Naive thymus-derived CD4-positive, alpha-beta T cell (primary cell): ENCODE measurements at regions of chr17 and their contacts with region 1.

Region 1: GRCh38 chr17:68457539-68458259 is 403 bp upstream of the WIPI1 start:
- DNase-seq: peak; percentile 96 to 99 (median 97)
- ATAC-seq: peak; percentile 98
- H3K4me3 ChIP-seq: peak overlapping the region; percentile 52
- H3K4me3 Mint-ChIP-seq: peak overlapping the region; percentile 68 to 87 (median 84)
- H3K27ac ChIP-seq: peak overlapping the region; percentile 73
- H3K27ac Mint-ChIP-seq: peak overlapping the region; percentile 45 to 98 (median 91)
- H3K4me1 ChIP-seq: peaks cover 36 to 52% of the 10 kb centered on the region in 2 donors
- H3K4me1 Mint-ChIP-seq: peaks cover 26 to 66% (median 58%) of the 10 kb centered on the region in 7 donors
- H3K27me3 ChIP-seq: no peaks in the 10 kb centered on the region
- H3K27me3 Mint-ChIP-seq: no peaks in the 10 kb centered on the region

Region 2: GRCh38 chr17:67800495-67800928 is 657.2 kb before region 1 on chr17:
- CTCF ChIA-PET with region 1: no interaction called
- POLR2A ChIA-PET with region 1: no interaction called
- intact Hi-C with region 1: loop called in 1 of 2 experiments (anchors 2 kb)
- DNase-seq: peak in 6 of 9 donors; percentile 10 to 40 (median 19)
- ATAC-seq: peak; percentile 86
- H3K4me3 ChIP-seq: no peak overlapping the region
- H3K4me3 Mint-ChIP-seq: no peak overlapping the region
- H3K27ac ChIP-seq: no peak overlapping the region
- H3K27ac Mint-ChIP-seq: peak overlapping the region in 1 of 9 donors; percentile 39
- H3K4me1 ChIP-seq: no peaks in the 10 kb centered on the region
- H3K4me1 Mint-ChIP-seq: peaks cover 0 to 9% (median 0%) of the 10 kb centered on the region in 7 donors
- H3K27me3 ChIP-seq: no peaks in the 10 kb centered on the region
- H3K27me3 Mint-ChIP-seq: peaks cover 0 to 3% (median 0%) of the 10 kb centered on the region in 5 donors

Region 3: DNA sequence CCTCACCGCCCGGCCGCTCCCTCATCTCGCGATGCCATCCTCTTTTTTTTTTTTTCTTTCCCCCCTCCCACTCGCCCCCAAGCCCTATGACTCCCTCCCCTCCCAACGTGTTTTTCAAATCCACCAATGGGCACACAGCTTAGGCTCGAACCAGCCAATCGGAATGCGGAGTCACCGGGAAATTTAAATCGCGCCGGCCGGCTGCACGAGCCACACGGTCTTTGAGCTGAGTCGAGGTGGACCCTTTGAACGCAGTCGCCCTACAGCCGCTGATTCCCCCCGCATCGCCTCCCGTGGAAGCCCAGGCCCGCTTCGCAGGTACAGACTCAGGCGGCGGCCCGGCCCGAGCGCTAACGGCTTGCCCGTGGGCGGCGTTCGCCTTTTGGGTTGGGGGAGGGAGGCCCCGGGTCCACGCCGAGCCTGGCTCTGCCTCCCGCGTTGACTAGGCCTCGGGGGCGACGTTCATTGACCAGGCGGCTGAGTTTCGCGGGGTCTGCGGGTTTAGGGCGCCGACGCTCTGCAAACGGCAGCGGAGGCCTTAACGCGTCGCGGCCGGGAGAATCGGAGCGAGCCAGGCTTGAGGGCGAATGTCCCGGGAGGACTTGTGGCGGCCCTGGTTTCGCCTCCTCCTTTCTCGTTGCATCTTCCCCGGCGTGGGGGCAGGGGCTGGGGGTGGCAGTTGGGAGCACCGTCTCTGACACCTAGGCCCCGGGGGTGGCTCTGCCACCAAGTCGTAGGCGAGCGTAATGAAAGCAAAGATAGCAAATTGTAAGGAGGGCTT is 422.0 kb before region 1 on chr17 and contains the start of gene KPNA2:
- CTCF ChIA-PET with region 1: interaction called, 4 read pairs
- POLR2A ChIA-PET with region 1: no interaction called
- intact Hi-C with region 1: loop called (anchors 1 kb)
- DNase-seq: peak; percentile 70 to 95 (median 91)
- ATAC-seq: peak; percentile 94
- H3K4me3 ChIP-seq: peak within 1 kb of the TSS; percentile 71
- H3K4me3 Mint-ChIP-seq: peak within 1 kb of the TSS; percentile 83 to 97 (median 91)
- H3K27ac ChIP-seq: peak within 1 kb of the TSS; percentile 91
- H3K27ac Mint-ChIP-seq: peak within 1 kb of the TSS; percentile 83 to 97 (median 92)
- H3K4me1 ChIP-seq: peaks cover 8 to 16% of the 10 kb centered on the region in 2 donors
- H3K4me1 Mint-ChIP-seq: peaks cover 6 to 32% (median 15%) of the 10 kb centered on the region in 7 donors
- H3K27me3 ChIP-seq: no peaks in the 10 kb centered on the region
- H3K27me3 Mint-ChIP-seq: peaks cover 0 to 3% (median 0%) of the 10 kb centered on the region in 5 donors
- total RNA-seq, gene KPNA2: 8.4 to 161 (median 45.9) TPM

Region 4: GRCh38 chr17:68205251-68205807 is 252.4 kb before region 1 on chr17:
- CTCF ChIA-PET with region 1: interaction called, 8 read pairs
- POLR2A ChIA-PET with region 1: interaction called, 10 read pairs
- intact Hi-C with region 1: loop called in 1 of 2 experiments (anchors 1 kb)
- DNase-seq: peak; percentile 81 to 96 (median 91)
- ATAC-seq: peak; percentile 94
- H3K4me3 ChIP-seq: peak overlapping the region; percentile 50
- H3K4me3 Mint-ChIP-seq: peak overlapping the region; percentile 82 to 96 (median 88)
- H3K27ac ChIP-seq: peak overlapping the region; percentile 81
- H3K27ac Mint-ChIP-seq: peak overlapping the region in 7 of 9 donors; percentile 62 to 94 (median 88)
- H3K4me1 ChIP-seq: peaks cover 3 to 11% of the 10 kb centered on the region in 2 donors
- H3K4me1 Mint-ChIP-seq: peaks cover 7 to 38% (median 28%) of the 10 kb centered on the region in 7 donors
- H3K27me3 ChIP-seq: no peaks in the 10 kb centered on the region
- H3K27me3 Mint-ChIP-seq: peaks cover 0 to 12% (median 0%) of the 10 kb centered on the region in 5 donors

Region 5: GRCh38 chr17:68255731-68256538 is 201.8 kb before region 1 on chr17:
- CTCF ChIA-PET with region 1: interaction called, 11 read pairs
- POLR2A ChIA-PET with region 1: interaction called, 7 read pairs
- intact Hi-C with region 1: no loop called
- DNase-seq: peak in 4 of 9 donors; percentile 27 to 44 (median 36)
- ATAC-seq: peak; percentile 32
- H3K4me3 ChIP-seq: peak overlapping the region; percentile 7
- H3K4me3 Mint-ChIP-seq: peak overlapping the region in 9 of 10 donors; percentile 18 to 70 (median 62)
- H3K27ac ChIP-seq: peak overlapping the region; percentile 92
- H3K27ac Mint-ChIP-seq: peak overlapping the region; percentile 77 to 97 (median 93)
- H3K4me1 ChIP-seq: peaks cover 74 to 91% of the 10 kb centered on the region in 2 donors
- H3K4me1 Mint-ChIP-seq: peaks cover 42 to 84% (median 75%) of the 10 kb centered on the region in 7 donors
- H3K27me3 ChIP-seq: no peaks in the 10 kb centered on the region
- H3K27me3 Mint-ChIP-seq: no peaks in the 10 kb centered on the region

Region 6: GRCh38 chr17:68512247-68512982 is 54.7 kb after region 1 on chr17 and contains the start of gene PRKAR1A:
- CTCF ChIA-PET with region 1: no interaction called
- POLR2A ChIA-PET with region 1: no interaction called
- intact Hi-C with region 1: loop called (anchors 1 to 2 kb)
- DNase-seq: peak; percentile 84 to 96 (median 94)
- ATAC-seq: peak; percentile 92
- H3K4me3 ChIP-seq: peak within 1 kb of the TSS; percentile 97
- H3K4me3 Mint-ChIP-seq: peak within 1 kb of the TSS; percentile 89 to 100 (median 100)
- H3K27ac ChIP-seq: peak within 1 kb of the TSS; percentile 98
- H3K27ac Mint-ChIP-seq: peak within 1 kb of the TSS; percentile 91 to 100 (median 100)
- H3K4me1 ChIP-seq: peaks cover 13 to 22% of the 10 kb centered on the region in 2 donors
- H3K4me1 Mint-ChIP-seq: peaks cover 34 to 74% (median 51%) of the 10 kb centered on the region in 7 donors
- H3K27me3 ChIP-seq: no peaks in the 10 kb centered on the region
- H3K27me3 Mint-ChIP-seq: no peaks in the 10 kb centered on the region
- total RNA-seq, gene PRKAR1A: 115 to 224 (median 156) TPM